H1 (cell line): ENCODE measurements at regions of chr6 and their contacts with region 1.

Region 1: GRCh38 chr6:152552616-152553209 is 84.4 kb downstream of the SYNE1 start:
- DNase-seq: peak; percentile 36 to 73
- H3K4me3 ChIP-seq: no peak overlapping the region
- H3K27ac ChIP-seq: no peak overlapping the region
- H3K4me1 ChIP-seq: no peaks in the 10 kb centered on the region
- H3K27me3 ChIP-seq: no peaks in the 10 kb centered on the region
- CTCF ChIP-seq: peak; percentile 77 to 95 (median 87)
- EP300 ChIP-seq: no peak
- POLR2A ChIP-seq: no peak
- RAD21 ChIP-seq: peak; percentile 91 to 96

Region 2: DNA sequence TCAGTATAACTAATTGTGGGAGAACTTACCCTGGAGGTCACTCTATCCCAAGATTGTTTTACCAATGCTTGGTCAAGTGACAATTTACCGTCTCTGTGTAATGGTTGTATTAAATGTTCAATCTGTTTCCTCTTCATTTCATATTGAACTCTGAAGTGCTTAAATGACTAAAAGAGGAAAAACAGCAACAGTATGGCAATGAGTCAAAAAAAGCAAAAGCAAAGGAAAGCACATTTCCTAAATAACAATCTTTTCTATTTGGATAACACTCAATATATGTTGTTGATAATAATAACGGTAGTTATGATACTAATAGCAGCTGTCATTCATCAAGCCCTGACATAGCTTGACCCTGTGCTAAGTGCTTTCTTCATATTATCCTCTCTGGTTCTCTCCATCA is 67.9 kb before region 1 on chr6:
- CTCF ChIA-PET with region 1: interaction called, 14 read pairs
- POLR2A ChIA-PET with region 1: no interaction called
- DNase-seq: no peak
- H3K4me3 ChIP-seq: no peak overlapping the region
- H3K27ac ChIP-seq: no peak overlapping the region
- H3K4me1 ChIP-seq: no peaks in the 10 kb centered on the region
- H3K27me3 ChIP-seq: no peaks in the 10 kb centered on the region
- CTCF ChIP-seq: no peak
- EP300 ChIP-seq: no peak
- POLR2A ChIP-seq: no peak
- RAD21 ChIP-seq: no peak

Region 3: GRCh38 chr6:152595505-152595904 is 42.8 kb after region 1 on chr6:
- CTCF ChIA-PET with region 1: interaction called, 14 read pairs
- POLR2A ChIA-PET with region 1: no interaction called
- DNase-seq: no peak
- H3K4me3 ChIP-seq: no peak overlapping the region
- H3K27ac ChIP-seq: no peak overlapping the region
- H3K4me1 ChIP-seq: no peaks in the 10 kb centered on the region
- H3K27me3 ChIP-seq: no peaks in the 10 kb centered on the region
- CTCF ChIP-seq: peak in 2 of 3 experiments; percentile 30 to 54; a peak in 3 of 4 replicates
- EP300 ChIP-seq: no peak
- POLR2A ChIP-seq: no peak
- RAD21 ChIP-seq: peak in 1 of 2 experiments; percentile 17; a peak in 1 of 4 replicates

Region 4: DNA sequence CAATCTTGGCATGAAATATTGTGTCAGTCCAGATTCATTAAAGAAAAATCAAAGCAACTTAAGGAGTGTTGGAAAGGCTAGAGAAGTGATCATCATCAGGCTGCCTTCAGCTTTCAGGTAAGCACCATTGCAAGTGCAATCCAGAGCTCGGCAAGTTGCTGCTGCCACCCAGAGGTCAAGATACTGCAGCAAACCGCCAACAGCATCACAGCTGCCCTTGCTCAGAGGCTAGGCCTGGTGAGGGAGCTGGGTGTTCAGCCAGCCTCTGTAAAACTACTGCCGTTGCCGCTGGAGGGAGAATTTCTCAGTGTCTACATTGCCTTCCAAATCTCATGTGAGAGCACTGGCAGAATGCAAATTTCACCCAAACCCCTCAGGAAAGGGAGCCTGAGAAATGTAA is 90.3 kb after region 1 on chr6:
- CTCF ChIA-PET with region 1: interaction called, 40 read pairs
- POLR2A ChIA-PET with region 1: no interaction called
- DNase-seq: peak; percentile 60 to 61
- H3K4me3 ChIP-seq: no peak overlapping the region
- H3K27ac ChIP-seq: no peak overlapping the region
- H3K4me1 ChIP-seq: no peaks in the 10 kb centered on the region
- H3K27me3 ChIP-seq: peaks cover 2 to 10% (median 6%) of the 10 kb centered on the region in 4 experiments; a peak in 6 of 7 replicates
- CTCF ChIP-seq: peak; percentile 84 to 93 (median 91)
- EP300 ChIP-seq: no peak
- POLR2A ChIP-seq: no peak
- RAD21 ChIP-seq: peak; percentile 89 to 90

Region 5: GRCh38 chr6:152648105-152648504 is 95.4 kb after region 1 on chr6:
- CTCF ChIA-PET with region 1: interaction called, 40 read pairs
- POLR2A ChIA-PET with region 1: no interaction called
- DNase-seq: no peak
- H3K4me3 ChIP-seq: no peak overlapping the region
- H3K27ac ChIP-seq: no peak overlapping the region
- H3K4me1 ChIP-seq: no peaks in the 10 kb centered on the region; a peak in 1 of 7 replicates
- H3K27me3 ChIP-seq: no peaks in the 10 kb centered on the region
- CTCF ChIP-seq: no peak
- EP300 ChIP-seq: no peak
- POLR2A ChIP-seq: no peak
- RAD21 ChIP-seq: no peak

Region 6: GRCh38 chr6:152669895-152670294 is 117.2 kb after region 1 on chr6:
- CTCF ChIA-PET with region 1: interaction called, 12 read pairs
- POLR2A ChIA-PET with region 1: no interaction called
- DNase-seq: no peak
- H3K4me3 ChIP-seq: no peak overlapping the region
- H3K27ac ChIP-seq: no peak overlapping the region
- H3K4me1 ChIP-seq: no peaks in the 10 kb centered on the region
- H3K27me3 ChIP-seq: no peaks in the 10 kb centered on the region
- CTCF ChIP-seq: peak in 2 of 3 experiments; percentile 30 to 39; a peak in 2 of 4 replicates
- EP300 ChIP-seq: no peak
- POLR2A ChIP-seq: no peak
- RAD21 ChIP-seq: peak; percentile 66 to 71

Region 7: GRCh38 chr6:152701081-152701862 is 148.6 kb after region 1 on chr6:
- CTCF ChIA-PET with region 1: interaction called, 21 read pairs
- POLR2A ChIA-PET with region 1: no interaction called
- DNase-seq: no peak
- H3K4me3 ChIP-seq: no peak overlapping the region
- H3K27ac ChIP-seq: no peak overlapping the region
- H3K4me1 ChIP-seq: no peaks in the 10 kb centered on the region
- H3K27me3 ChIP-seq: peaks cover 0 to 1% (median 0%) of the 10 kb centered on the region in 4 experiments; a peak in 1 of 7 replicates
- CTCF ChIP-seq: peak in 2 of 3 experiments; percentile 16 to 44; a peak in 2 of 4 replicates
- EP300 ChIP-seq: no peak
- POLR2A ChIP-seq: no peak
- RAD21 ChIP-seq: peak; percentile 68 to 70